A549 (cell line): ENCODE measurements at regions of chrX and their contacts with region 1.

Region 1: GRCh38 chrX:119516157-119516702 is 48.0 kb downstream of the SLC25A5 start:
- DNase-seq: peak; percentile 71 to 80
- ATAC-seq: peak; percentile 81 to 83
- H3K4me3 ChIP-seq: no peak overlapping the region
- H3K27ac ChIP-seq: no peak overlapping the region; a peak in 1 of 6 replicates
- H3K4me1 ChIP-seq: peaks cover 13% of the 10 kb centered on the region
- CTCF ChIP-seq: peak; percentile 81
- EP300 ChIP-seq: no peak
- POLR2A ChIP-seq: no peak
- RAD21 ChIP-seq: peak; percentile 82 to 94

Region 2: DNA sequence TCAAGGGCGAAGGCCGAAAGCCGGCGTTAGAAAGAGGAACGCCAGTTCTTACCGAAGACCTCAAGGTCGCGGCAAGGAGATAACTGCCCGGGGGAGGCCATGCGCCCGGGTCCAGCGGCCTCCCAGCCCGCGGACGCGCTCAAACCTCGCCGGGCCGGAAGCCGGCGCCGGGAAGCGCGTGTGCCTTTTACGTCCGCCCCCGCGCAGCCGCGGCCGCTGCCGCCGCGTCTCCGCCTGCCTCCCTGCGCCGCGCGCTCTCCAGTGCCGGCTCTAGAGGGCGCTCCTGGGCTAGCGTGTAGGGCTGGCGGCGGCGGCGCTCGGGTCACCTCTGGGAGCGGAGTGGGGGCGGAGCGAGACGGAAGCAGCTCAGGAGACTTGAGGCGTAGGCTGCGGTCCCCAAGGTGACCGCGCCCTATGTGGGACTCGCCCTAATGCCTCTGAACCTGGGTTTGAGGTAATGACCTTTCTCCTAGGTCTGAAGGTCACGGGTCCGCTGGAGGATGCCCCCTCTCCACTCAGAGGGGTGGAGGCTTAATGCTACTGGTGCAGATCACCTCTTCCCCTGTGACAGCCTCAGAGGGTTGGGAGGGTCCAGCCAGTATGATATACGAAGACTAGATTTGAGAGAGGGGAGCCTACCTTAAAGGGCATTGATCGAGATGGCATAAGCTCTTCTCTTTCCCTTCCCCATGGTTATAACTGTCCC is 47.1 kb before region 1 on chrX:
- CTCF ChIA-PET with region 1: interaction called, 34 read pairs
- POLR2A ChIA-PET with region 1: interaction called, 17 read pairs
- DNase-seq: peak; percentile 49 to 84
- ATAC-seq: peak; percentile 83 to 87
- H3K4me3 ChIP-seq: peak overlapping the region; percentile 98
- H3K27ac ChIP-seq: peak overlapping the region; percentile 97 to 98
- H3K4me1 ChIP-seq: peaks cover 17% of the 10 kb centered on the region
- CTCF ChIP-seq: peak; percentile 73
- EP300 ChIP-seq: no peak
- POLR2A ChIP-seq: peak; percentile 42
- RAD21 ChIP-seq: peak; percentile 47 to 72; a peak in 4 of 5 replicates

Region 3: GRCh38 chrX:119474615-119475388 is 41.4 kb before region 1 on chrX:
- CTCF ChIA-PET with region 1: interaction called, 814 read pairs
- POLR2A ChIA-PET with region 1: interaction called, 5 read pairs
- DNase-seq: no peak
- ATAC-seq: no peak
- H3K4me3 ChIP-seq: no peak overlapping the region
- H3K27ac ChIP-seq: no peak overlapping the region
- H3K4me1 ChIP-seq: peaks cover 38% of the 10 kb centered on the region
- CTCF ChIP-seq: no peak
- EP300 ChIP-seq: no peak
- POLR2A ChIP-seq: no peak
- RAD21 ChIP-seq: no peak

Region 4: DNA sequence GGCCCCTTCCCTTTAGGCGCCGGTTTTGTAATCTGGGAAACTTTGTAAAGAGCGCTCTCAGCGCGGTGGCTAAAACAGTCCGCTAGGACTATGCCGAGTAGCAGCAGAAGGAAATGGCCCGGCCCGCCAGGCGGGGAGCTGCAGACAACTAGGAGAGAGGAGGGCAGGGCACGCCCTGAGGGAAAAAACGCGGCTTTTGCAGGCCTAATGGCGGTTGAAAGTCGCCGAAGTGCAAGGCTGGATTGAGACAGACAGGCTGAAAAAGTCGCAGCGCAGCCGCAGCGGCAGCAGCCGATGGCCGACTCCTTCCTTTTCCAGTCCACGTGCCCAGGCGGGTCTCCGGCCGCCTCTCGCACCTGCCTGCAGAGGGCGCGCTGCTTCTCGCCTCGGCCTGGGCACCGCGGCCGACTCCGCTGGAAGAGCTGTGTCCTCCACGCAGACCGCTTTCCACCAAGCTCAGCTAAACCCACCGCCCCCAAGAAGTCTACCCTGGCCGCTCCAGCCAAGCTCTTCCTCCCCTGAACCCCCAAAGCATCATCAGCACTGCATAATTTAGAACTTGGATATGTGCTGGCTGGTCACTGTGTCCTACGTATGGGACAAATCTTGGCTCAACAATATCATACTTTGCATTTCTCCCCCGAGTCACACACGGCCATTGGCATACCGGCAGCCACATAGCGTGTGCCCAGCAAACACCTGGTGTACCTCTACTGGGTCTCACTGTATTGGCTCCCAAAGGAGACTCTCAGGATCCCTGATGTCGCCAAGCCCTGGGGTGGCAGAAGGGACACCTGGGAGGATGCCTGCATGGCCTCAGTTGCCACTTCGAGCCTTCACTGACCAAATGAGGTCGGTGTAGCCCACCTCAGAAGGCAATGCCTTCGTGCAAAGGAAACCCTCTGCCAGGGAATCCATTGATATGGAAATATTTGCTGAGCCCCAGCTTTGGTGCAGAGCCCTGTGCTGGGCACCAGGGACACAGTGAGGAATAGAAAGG is 33.4 kb before region 1 on chrX:
- CTCF ChIA-PET with region 1: interaction called, 814 read pairs
- POLR2A ChIA-PET with region 1: interaction called, 17 read pairs
- DNase-seq: peak; percentile 55 to 80
- ATAC-seq: peak; percentile 85 to 92
- H3K4me3 ChIP-seq: peak overlapping the region; percentile 31
- H3K27ac ChIP-seq: peak overlapping the region; percentile 81 to 90
- H3K4me1 ChIP-seq: peaks cover 17% of the 10 kb centered on the region
- CTCF ChIP-seq: peak; percentile 78
- EP300 ChIP-seq: no peak
- POLR2A ChIP-seq: peak; percentile 34; the same call in 1 of the 2 replicates
- RAD21 ChIP-seq: peak; percentile 35 to 58

Region 5: DNA sequence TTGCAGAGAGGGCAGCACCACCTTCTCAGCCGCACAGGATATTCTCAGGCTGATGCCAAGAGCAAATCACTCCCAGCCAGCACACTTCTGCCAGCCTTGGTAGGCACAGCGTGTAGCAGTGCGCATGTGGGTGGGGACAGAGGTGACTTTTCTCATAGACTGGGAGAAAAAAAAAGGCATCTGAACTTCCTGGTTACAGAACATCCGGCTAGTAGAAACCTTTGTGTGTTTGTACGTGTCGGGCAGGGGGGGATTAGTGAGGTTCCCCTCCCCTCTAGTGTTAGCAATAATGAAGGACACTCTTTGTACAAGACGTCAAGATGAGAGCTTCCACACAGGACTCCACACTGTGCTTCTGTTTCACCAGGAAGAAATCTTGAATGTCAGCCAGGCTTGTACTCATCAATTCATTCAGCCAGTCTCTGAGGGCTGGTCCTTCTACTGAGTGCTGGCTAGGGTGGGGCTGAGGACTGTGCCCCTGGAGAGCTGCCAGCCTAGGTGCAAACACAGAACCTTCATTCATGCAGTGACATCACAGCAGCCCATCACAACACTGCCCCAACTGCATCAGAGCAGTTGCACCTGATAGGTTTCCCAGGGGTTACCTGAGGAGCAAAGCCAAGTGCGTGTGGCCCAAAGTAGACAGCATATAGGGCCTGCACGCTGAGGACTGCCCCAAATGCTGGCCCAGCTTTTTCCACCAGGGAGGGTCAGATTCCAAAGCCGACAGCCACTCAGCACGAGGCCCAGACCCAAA is 13.3 kb before region 1 on chrX:
- CTCF ChIA-PET with region 1: interaction called, 814 read pairs
- POLR2A ChIA-PET with region 1: interaction called, 15 read pairs
- DNase-seq: peak; percentile 78 to 96
- ATAC-seq: peak; percentile 85 to 91
- H3K4me3 ChIP-seq: no peak overlapping the region
- H3K27ac ChIP-seq: peak overlapping the region; percentile 90 to 100
- H3K4me1 ChIP-seq: peaks cover 62% of the 10 kb centered on the region
- CTCF ChIP-seq: no peak; the same call in 2 of the 3 replicates
- EP300 ChIP-seq: no peak
- POLR2A ChIP-seq: peak; percentile 39
- RAD21 ChIP-seq: peak; percentile 25 to 36; a peak in 4 of 5 replicates

Region 6: DNA sequence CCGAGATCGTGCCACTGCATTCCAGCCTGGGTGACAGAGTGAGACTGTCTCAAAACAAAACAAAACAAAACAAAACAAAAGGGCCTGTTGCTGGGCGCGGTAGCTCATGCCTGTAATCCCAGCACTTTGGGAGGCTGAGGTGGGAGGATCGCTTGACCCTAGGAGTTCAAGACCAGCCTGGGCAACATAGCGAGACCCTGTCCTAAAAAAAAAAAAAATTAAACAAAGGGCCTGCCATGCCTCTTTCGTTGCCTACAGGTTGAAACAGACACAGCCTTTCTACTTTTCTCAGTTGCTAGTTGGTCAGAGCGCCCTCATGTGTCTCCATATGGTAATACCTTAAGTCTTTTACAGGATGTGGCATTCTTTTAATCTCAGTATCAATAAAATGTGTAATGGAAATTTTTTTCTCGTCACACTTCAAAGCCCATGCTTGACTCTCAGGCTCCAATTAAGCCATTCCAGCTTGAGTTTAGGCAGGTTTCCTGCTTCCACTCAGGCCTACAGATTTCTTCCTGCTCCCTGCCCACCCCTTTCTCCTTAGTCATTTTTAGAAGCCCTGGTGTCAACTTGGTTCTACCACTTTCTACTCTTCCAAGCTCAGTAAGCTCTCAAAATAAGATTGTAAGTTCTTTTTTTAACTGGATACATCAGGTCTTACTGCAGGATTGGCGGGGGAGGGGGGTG is 237.5 kb after region 1 on chrX:
- CTCF ChIA-PET with region 1: interaction called, 10 read pairs
- POLR2A ChIA-PET with region 1: no interaction called
- DNase-seq: peak in 1 of 2 experiments; percentile 59
- ATAC-seq: peak in 1 of 2 experiments; percentile 19; a peak in 1 of 6 replicates
- H3K4me3 ChIP-seq: no peak overlapping the region
- H3K27ac ChIP-seq: no peak overlapping the region
- H3K4me1 ChIP-seq: no peaks in the 10 kb centered on the region
- CTCF ChIP-seq: peak; percentile 51
- EP300 ChIP-seq: no peak
- POLR2A ChIP-seq: no peak
- RAD21 ChIP-seq: peak in 1 of 2 experiments; percentile 42; a peak in 2 of 5 replicates